ENCODE measurements at regions of chr3 and their contacts with region 1.

Region 1: GRCh38 chr3:107740992-107741896 is 218.5 kb downstream of the BBX start:
- DNase-seq: no peak

Region 2: GRCh38 chr3:107676469-107677309 is 64.6 kb before region 1 on chr3:
- intact Hi-C with region 1: loop called (anchors 5 kb)
- DNase-seq: no peak

Measured in cardiac septum (tissue), 1 donor.